ENCODE measurements at regions of chr11 and their contacts with region 1.

Region 1: GRCh38 chr11:28922386-28922981 is 814.3 kb downstream of the METTL15 start:
- DNase-seq: no peak
- H3K4me3 ChIP-seq: no peak overlapping the region
- H3K4me3 Mint-ChIP-seq: no peak overlapping the region
- H3K27ac Mint-ChIP-seq: no peak overlapping the region
- H3K4me1 ChIP-seq: no peaks in the 10 kb centered on the region
- H3K4me1 Mint-ChIP-seq: peaks cover 4% of the 10 kb centered on the region
- H3K27me3 ChIP-seq: no peaks in the 10 kb centered on the region
- H3K27me3 Mint-ChIP-seq: peaks cover 5% of the 10 kb centered on the region
- CTCF ChIP-seq: no peak

Region 2: DNA sequence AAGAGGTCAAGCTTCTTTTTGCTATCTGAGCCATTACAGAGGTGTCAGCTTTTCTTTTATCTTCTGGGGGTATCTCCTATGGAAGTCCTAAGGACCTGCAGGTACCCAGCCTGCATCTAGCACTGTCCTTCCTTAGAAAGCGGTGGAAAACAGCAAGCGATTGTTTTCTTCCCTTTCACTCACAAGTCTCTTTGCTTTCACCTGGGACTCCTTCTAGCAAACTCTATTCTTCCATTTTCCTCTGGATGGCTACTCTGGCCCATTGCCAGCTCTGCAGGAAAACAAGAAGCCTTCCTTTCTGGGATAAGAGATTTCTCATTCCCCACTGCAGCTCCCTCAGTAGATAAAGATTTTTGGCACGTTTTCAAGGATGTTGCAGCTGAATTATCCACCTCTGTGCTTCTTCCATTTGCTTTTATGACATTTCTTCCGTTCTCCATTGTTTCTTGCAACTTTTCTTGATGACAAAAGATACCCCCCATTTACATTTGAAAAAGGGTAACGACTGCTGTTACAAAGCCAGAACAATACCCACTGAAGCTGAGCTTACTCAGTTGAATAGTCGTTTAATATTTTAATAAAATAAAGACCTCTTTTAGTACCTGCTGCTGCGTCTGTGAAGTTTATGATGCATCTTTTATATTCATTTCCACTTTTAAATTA is 1182.0 kb before region 1 on chr11:
- CTCF ChIA-PET with region 1: no interaction called
- POLR2A ChIA-PET with region 1: interaction called, 10 read pairs
- intact Hi-C with region 1: no loop called
- DNase-seq: no peak
- H3K4me3 ChIP-seq: no peak overlapping the region
- H3K4me3 Mint-ChIP-seq: no peak overlapping the region
- H3K27ac Mint-ChIP-seq: no peak overlapping the region
- H3K4me1 ChIP-seq: no peaks in the 10 kb centered on the region
- H3K4me1 Mint-ChIP-seq: no peaks in the 10 kb centered on the region
- H3K27me3 ChIP-seq: no peaks in the 10 kb centered on the region
- H3K27me3 Mint-ChIP-seq: peaks cover 2% of the 10 kb centered on the region
- CTCF ChIP-seq: no peak

Measured in Caco-2 (cell line).